ENCODE measurements at regions of chr18 and their contacts with region 1.

Region 1: DNA sequence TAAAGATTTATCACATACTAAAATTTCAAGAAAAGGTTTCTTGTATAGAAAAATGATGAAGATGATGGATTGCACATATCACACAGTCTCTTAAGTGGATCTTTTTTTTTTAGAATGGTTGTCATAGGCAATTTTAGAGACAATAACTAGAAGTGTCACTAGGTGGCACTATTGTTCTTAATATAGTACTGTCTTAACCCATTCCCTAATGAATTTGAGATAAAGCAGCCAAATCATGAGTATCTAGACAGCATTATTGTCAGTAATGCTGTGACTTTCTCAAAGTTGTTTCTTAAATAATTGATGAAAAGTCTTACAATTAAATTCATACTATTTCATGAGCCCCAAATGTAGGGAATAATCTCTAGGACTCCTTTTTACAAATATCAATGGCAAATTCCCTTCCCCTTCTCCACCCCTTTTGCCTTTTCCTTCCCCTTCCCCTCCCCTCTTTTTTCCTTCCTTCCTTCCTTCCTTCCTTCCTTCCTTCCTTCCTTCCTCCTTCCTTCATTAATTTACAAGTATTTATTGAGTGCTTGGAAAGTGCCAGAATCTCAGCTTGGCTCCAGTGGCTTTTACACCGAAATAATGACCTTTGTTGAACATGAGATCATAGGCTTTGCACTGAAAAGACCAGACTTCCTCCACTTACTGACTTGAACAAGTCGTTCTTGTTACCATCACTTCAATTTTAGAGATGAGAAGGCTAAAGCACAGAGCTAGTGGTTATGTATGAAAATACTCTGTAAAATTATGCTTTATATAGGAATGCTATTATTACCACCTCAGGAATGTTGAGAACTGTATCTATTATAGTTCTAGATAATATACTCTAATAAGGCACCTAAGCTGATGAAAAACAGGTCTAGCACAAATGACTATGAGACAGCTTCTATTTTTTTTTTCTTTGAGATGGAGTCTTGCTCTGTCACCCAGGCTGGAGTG is 19.8 kb downstream of the MYL12B start:
- DNase-seq: no peak
- H3K4me3 ChIP-seq: no peak overlapping the region
- H3K27ac ChIP-seq: no peak overlapping the region
- H3K4me1 ChIP-seq: no peaks in the 10 kb centered on the region
- H3K27me3 ChIP-seq: no peaks in the 10 kb centered on the region
- CTCF ChIP-seq: peak; percentile 32 to 89 (median 63)
- POLR2A ChIP-seq: no peak

Region 2: DNA sequence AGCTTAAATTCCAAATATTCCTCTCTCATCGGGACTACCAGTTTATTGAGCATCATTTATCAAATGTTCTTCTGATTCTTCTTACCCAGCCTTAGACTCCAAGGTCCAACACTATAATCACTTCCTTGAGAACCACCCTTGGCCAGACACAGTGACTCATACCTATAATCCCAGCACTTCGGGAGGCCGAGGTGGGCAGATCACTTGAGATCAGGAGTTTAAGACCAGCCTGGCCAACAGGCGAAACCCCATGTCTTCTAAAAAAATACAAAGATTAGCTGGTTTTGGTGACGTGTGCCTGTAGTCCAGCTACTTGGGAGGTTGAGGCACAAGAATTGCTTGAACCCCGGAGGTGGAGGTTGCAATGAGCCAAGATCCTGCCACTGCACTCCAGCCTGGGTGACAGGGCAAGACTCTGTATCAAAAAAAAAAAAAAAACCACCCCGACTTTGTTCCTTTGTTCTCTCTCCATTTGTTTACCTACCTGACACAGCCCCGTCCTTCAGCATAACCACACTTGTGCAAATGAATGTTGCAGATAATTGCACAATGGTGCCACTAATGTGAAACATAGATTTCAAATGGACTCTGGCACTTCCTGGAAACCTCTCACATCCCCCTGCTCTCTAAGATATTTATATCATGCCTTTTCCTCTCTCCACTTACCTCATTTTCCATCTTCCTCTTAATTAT is 229.9 kb before region 1 on chr18:
- intact Hi-C with region 1: no loop called
- DNase-seq: no peak
- H3K4me3 ChIP-seq: no peak overlapping the region
- H3K27ac ChIP-seq: no peak overlapping the region
- H3K4me1 ChIP-seq: no peaks in the 10 kb centered on the region
- H3K27me3 ChIP-seq: no peaks in the 10 kb centered on the region
- CTCF ChIP-seq: no peak
- POLR2A ChIP-seq: no peak

Region 3: GRCh38 chr18:3451183-3451988 is 169.7 kb after region 1 on chr18:
- intact Hi-C with region 1: loop called (anchors 10 kb)
- DNase-seq: peak; percentile 98
- H3K4me3 ChIP-seq: peak overlapping the region; percentile 68 to 97 (median 96)
- H3K27ac ChIP-seq: peak overlapping the region; percentile 93 to 100 (median 98)
- H3K4me1 ChIP-seq: peaks cover 30 to 32% of the 10 kb centered on the region in 2 donors
- H3K27me3 ChIP-seq: no peaks in the 10 kb centered on the region
- CTCF ChIP-seq: no peak
- POLR2A ChIP-seq: peak; percentile 82 to 98

Region 4: GRCh38 chr18:3585656-3586509 is 304.2 kb after region 1 on chr18:
- intact Hi-C with region 1: loop called (anchors 10 kb)
- DNase-seq: peak; percentile 84 to 89
- H3K4me3 ChIP-seq: no peak overlapping the region
- H3K27ac ChIP-seq: no peak overlapping the region
- H3K4me1 ChIP-seq: peaks cover 0 to 7% of the 10 kb centered on the region in 2 donors
- H3K27me3 ChIP-seq: no peaks in the 10 kb centered on the region
- CTCF ChIP-seq: peak; percentile 61 to 91 (median 81)
- POLR2A ChIP-seq: no peak

Region 5: DNA sequence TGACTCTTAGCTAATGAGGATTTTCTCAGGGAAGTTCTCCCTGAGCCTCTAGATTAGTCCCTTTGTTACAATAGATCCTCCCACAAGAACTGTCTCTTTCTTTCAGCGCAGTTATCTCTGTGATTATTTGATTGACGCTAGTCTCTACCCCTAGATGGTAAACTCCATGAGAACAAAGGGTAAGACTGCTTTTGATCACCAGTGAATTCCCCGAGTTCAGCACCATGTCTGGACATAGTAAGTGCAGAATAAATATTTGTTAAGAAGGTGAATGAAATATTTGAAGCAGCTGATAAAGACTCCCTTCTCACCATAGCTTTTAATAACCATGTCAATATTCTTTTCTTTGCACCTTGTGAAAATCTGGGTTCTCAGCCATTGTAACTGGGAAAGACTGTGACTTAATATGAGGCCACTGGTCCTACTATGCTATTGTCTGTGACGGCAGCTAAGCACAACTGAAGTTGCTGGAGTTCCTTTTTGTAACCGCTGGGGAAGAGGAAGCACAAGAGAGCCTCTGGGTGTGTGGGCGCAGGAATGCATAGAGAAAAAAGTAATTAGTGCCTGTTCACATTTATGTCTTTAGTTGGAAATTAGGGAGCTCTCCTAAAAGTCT is 382.9 kb after region 1 on chr18:
- intact Hi-C with region 1: loop called (anchors 2 kb)
- DNase-seq: no peak
- H3K4me3 ChIP-seq: no peak overlapping the region
- H3K27ac ChIP-seq: no peak overlapping the region
- H3K4me1 ChIP-seq: peaks cover 7 to 17% of the 10 kb centered on the region in 2 donors
- H3K27me3 ChIP-seq: no peaks in the 10 kb centered on the region
- CTCF ChIP-seq: no peak
- POLR2A ChIP-seq: no peak

Region 6: DNA sequence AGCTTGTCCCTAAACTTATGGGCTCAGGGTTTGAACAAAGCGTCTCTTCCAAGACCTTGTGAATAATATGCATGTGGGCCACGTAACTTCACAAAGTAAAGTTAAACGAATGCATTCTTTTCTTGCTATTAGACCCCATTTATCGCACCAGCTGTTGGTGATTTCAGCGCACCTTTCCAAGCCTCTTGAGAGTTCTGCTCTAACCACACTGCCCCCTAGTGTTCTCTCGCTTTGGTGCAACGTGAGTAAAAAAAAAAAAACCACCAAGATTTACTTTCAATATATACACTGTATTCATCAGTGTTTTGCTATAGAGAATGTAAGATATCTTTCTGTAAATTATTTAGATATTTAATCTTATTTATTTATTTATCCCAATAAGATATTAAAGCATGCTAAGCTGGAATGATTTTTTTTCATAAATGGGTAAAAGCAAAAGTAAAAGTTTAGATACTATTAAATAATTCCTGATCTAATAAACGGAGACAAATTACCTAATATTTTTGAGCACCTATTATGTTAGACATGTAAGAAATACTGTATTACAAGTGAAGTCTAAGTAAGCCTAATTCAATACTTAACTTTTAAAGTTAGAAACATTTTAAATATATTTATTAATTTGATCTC is 713.9 kb after region 1 on chr18:
- intact Hi-C with region 1: loop called (anchors 10 kb)
- DNase-seq: peak; percentile 47 to 58
- H3K4me3 ChIP-seq: no peak overlapping the region
- H3K27ac ChIP-seq: no peak overlapping the region
- H3K4me1 ChIP-seq: no peaks in the 10 kb centered on the region
- H3K27me3 ChIP-seq: no peaks in the 10 kb centered on the region
- CTCF ChIP-seq: peak; percentile 58 to 81 (median 74)
- POLR2A ChIP-seq: no peak